Tibial artery (tissue), 4 donors: ENCODE measurements at regions of chr20 and their contacts with region 1.

Region 1: DNA sequence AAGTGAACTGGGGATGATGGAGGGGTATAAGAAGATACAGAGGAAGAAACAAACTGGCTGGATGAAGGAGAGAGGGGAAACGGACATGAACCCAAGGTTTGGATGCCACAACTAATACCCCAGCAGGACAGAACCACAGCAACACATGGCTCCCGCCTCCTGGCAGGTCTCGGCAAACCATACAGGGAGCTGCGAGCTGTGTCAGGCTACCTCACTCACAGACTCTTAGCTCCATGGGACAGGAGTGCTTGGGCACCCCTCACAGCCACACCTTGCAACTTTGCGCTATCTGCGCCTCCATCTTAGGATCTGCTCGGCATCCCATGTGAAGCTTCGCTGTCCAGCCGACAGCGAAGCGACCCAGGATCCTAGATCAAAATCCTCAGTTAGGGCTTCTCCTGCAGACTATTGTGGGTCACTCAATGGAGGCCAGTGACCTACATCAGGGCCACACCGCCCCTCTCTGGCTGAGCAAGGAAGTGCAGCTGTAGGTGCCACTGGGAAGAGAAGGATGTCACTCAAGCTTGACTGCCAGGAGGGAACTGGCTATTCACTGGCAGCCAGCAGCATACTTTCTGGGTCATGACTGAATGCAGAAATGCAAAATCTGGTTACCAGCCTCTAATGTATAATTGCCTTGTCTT is 174.4 kb upstream of the RIN2 start:
- DNase-seq: peak; percentile 59 to 85
- H3K4me3 ChIP-seq: no peak overlapping the region
- H3K27ac ChIP-seq: no peak overlapping the region
- H3K4me1 ChIP-seq: peaks cover 0 to 4% (median 0%) of the 10 kb centered on the region in 4 donors
- H3K27me3 ChIP-seq: no peaks in the 10 kb centered on the region
- CTCF ChIP-seq: peak; percentile 85 to 90

Region 2: GRCh38 chr20:19205977-19206396 is 377.7 kb before region 1 on chr20:
- intact Hi-C with region 1: loop called (anchors 2 kb)
- DNase-seq: peak; percentile 71 to 80
- H3K4me3 ChIP-seq: no peak overlapping the region
- H3K27ac ChIP-seq: no peak overlapping the region
- H3K4me1 ChIP-seq: peaks cover 0 to 11% (median 7%) of the 10 kb centered on the region in 4 donors
- H3K27me3 ChIP-seq: no peaks in the 10 kb centered on the region
- CTCF ChIP-seq: peak; percentile 87 to 91

Region 3: GRCh38 chr20:19368351-19368750 is 215.3 kb before region 1 on chr20:
- intact Hi-C with region 1: loop called (anchors 10 kb)
- DNase-seq: no peak
- H3K4me3 ChIP-seq: no peak overlapping the region
- H3K27ac ChIP-seq: no peak overlapping the region
- H3K4me1 ChIP-seq: peaks cover 0 to 28% (median 7%) of the 10 kb centered on the region in 4 donors
- H3K27me3 ChIP-seq: no peaks in the 10 kb centered on the region
- CTCF ChIP-seq: no peak